ENCODE measurements at regions of chr4 and their contacts with region 1.

Region 1: GRCh38 chr4:84750253-84750959 is 167.5 kb downstream of the CDS1 start:
- DNase-seq: no peak
- ATAC-seq: peak; percentile 68

Region 2: GRCh38 chr4:84319124-84319523 is 431.3 kb before region 1 on chr4:
- intact Hi-C with region 1: no loop called
- DNase-seq: peak; percentile 80
- ATAC-seq: peak; percentile 98

Region 3: GRCh38 chr4:84938316-84938715 is 187.9 kb after region 1 on chr4:
- intact Hi-C with region 1: no loop called
- DNase-seq: no peak
- ATAC-seq: peak; percentile 56

Region 4: GRCh38 chr4:84966383-84967242 is 216.2 kb after region 1 on chr4 and contains the start of gene WDFY3:
- intact Hi-C with region 1: loop called (anchors 5 kb)
- DNase-seq: peak; percentile 88
- ATAC-seq: peak; percentile 98
- total RNA-seq, gene WDFY3: 139 TPM